A673 (cell line): ENCODE measurements at regions of chr11 and their contacts with region 1.

Region 1: GRCh38 chr11:119843877-119844276 is 114.9 kb upstream of the NECTIN1 start:
- DNase-seq: no peak
- H3K4me3 ChIP-seq: no peak overlapping the region
- H3K27ac ChIP-seq: no peak overlapping the region
- H3K4me1 ChIP-seq: no peaks in the 10 kb centered on the region
- H3K27me3 ChIP-seq: peaks cover 10% of the 10 kb centered on the region
- CTCF ChIP-seq: no peak

Region 2: DNA sequence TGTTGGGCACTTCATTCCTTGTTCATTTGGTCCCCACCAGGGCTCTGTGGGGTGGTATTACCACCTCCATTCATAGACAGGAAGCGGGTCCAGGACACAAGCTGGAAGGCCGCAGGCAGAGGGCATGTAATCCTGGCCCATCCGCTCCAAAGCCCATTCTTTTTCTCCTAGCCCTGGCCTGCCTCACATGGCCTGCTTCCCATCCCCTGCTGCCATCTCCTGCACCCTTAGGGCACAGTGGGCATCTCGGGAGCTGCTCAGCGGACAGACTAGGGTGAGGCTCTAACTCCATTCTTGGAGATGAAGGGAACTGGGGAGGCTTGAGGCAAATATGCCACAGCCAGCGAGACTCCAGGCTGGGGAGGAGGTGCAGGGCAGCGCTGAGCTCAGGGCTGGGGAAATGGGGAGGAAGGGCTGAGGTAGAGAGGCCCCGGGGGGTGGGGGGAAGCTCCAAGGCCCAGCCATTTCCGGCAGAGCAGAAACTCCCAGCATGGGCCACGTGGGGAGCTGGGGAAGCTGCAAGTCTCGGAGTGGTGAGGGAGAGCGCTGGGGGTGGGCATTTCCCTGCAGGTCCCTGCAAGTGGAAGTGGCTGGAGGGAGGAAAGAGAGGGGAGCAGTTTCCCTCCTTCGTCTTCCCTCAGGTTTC is 903.8 kb before region 1 on chr11:
- CTCF ChIA-PET with region 1: no interaction called
- POLR2A ChIA-PET with region 1: interaction called, 10 read pairs
- intact Hi-C with region 1: no loop called
- DNase-seq: peak; percentile 77
- H3K4me3 ChIP-seq: no peak overlapping the region
- H3K27ac ChIP-seq: no peak overlapping the region
- H3K4me1 ChIP-seq: peaks cover 9% of the 10 kb centered on the region
- H3K27me3 ChIP-seq: no peaks in the 10 kb centered on the region
- CTCF ChIP-seq: no peak